Body of pancreas (tissue), 4 donors: ENCODE measurements at regions of chr1 and their contacts with region 1.

Region 1: GRCh38 chr1:24830680-24831272 is 85.5 kb downstream of the CLIC4 start:
- DNase-seq: no peak
- ATAC-seq: peak; percentile 68
- H3K4me3 ChIP-seq: no peak overlapping the region
- H3K27ac ChIP-seq: no peak overlapping the region
- H3K4me1 ChIP-seq: peaks cover 6% of the 10 kb centered on the region
- H3K27me3 ChIP-seq: no peaks in the 10 kb centered on the region
- CTCF ChIP-seq: peak; percentile 66 to 88 (median 80)
- POLR2A ChIP-seq: no peak

Region 2: DNA sequence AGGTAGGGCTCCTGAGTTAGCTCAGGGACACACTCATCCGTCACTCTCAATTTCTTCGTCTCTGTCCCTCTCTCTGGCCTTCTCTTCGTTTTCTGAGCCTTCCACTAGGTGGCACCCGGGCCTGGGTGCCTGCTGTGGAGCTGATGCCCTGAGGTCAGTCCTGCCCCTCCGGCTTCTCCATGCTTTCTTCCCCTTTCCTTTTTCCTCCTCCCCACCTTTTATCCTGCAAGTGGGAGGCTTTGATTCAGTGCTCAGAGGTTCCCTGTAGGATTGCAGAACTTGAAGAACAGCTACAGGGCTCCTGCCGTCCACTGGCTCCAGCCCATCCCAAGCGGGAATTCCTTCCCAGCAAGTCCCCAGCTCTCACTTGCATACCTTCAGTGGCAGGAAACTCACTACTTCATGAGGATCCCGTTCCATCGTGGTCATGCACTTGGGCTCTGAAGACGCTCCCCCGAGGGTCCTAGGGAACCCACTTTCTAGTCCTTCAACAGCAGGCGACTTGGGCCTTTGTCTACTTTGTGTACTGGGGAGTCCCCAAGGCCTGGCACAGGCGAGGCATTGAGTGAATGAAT is 142.1 kb before region 1 on chr1:
- intact Hi-C with region 1: loop called (anchors 2 kb)
- DNase-seq: peak; percentile 72 to 79 (median 74)
- ATAC-seq: peak; percentile 85
- H3K4me3 ChIP-seq: no peak overlapping the region
- H3K27ac ChIP-seq: no peak overlapping the region
- H3K4me1 ChIP-seq: no peaks in the 10 kb centered on the region
- H3K27me3 ChIP-seq: no peaks in the 10 kb centered on the region
- CTCF ChIP-seq: peak; percentile 70 to 95 (median 85)
- POLR2A ChIP-seq: no peak